ENCODE measurements at regions of chr9 and their contacts with region 1.

Region 1: DNA sequence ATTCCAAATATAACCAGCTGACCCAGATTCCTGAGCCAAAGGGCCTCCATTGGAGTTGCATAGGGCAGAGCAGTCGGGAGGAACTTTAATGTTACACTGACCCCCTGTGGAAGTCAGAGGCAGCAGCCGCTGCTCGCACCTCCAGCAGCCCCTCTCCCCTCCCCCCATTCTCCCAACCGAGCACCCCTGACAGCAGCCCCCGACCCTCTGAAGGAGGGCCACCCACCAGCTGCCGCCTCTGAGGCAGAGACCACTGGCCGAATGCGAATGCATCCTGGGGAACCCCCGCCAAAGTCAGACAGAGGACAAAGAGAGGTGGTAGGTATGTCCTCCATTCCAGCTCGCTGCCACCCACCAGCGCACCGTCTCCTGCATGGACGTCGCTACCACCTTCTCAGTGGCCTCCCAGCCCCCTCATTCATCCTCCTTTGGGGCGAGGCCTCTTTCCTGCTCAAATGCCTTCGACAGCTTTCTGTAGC is 231.0 kb downstream of the CDK5RAP2 start:
- DNase-seq: no peak
- ATAC-seq: peak; percentile 83
- H3K4me3 ChIP-seq: no peak overlapping the region
- H3K27ac ChIP-seq: no peak overlapping the region
- H3K4me1 ChIP-seq: no peaks in the 10 kb centered on the region
- H3K27me3 ChIP-seq: no peaks in the 10 kb centered on the region
- CTCF ChIP-seq: peak; percentile 76

Region 2: DNA sequence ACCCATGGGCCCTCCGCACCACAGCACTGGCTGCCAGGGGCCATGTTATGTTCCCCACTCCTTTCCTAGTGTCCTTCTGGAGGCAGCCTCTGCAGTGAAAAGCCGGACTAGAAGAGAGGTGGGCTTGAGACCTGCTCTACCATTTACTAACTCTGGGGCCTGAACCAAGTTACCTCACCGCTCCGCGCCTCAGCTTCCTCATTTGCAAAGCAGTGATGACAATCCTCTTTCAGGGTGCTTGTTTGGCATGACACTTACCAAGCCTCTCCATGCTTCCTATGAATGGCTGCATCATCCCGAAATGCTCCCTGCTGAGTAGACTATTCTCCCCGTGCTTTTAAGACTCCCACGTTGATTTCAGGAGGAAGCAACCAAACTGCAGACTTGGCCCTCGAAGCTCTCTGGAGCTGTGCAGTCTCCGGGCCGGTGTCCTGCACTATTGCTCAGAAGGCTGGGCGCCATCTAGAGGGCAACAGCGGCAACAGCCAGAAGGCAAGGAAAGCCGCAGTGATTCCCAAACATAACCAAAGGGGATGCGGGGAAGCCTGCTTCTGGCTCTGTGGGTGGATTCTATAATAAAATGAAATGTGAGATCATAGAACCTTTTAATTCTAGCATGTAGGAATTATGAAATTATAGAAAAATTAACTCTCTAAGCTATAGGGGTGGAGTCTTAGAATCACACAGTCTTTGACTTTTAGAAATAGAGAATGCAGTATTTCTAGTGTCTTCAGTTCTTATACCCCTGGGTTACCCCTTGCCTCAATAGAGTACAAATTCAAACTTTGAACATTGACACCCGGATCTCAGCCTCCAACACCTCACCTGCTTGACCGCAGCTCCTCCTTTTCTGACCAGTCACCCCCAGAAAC is 379.9 kb before region 1 on chr9:
- CTCF ChIA-PET with region 1: no interaction called
- POLR2A ChIA-PET with region 1: no interaction called
- in situ Hi-C with region 1: no loop called
- intact Hi-C with region 1: loop called (anchors 10 kb)
- DNase-seq: no peak
- ATAC-seq: peak; percentile 94
- H3K4me3 ChIP-seq: no peak overlapping the region
- H3K27ac ChIP-seq: no peak overlapping the region
- H3K4me1 ChIP-seq: peaks cover 3% of the 10 kb centered on the region
- H3K27me3 ChIP-seq: no peaks in the 10 kb centered on the region
- CTCF ChIP-seq: peak; percentile 92

Region 3: DNA sequence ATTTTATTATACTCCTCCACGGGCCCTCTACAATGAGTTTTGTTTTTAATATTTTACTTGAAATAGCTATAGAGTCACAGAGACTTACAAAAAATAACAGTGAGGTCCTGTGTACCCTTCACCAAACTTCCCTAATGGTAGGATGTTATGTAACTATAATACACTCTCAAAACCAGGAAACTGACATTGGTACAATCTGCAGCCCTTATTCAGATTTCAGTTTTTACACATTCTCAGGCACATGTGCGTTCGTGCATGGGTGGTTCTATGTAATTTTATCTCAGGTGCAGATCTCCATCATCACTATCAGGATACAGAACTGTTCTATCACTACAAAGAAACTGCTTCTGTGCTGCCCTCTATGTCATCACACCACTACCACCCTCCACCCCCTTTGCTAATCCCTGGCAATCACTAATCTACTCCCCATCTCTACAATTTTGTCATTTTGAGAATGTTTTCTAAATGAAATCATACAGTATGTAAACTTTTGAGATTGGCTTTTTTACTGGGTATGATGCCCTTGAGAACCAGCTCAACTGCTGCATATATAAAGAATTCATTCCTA is 836.3 kb after region 1 on chr9:
- CTCF ChIA-PET with region 1: no interaction called
- POLR2A ChIA-PET with region 1: no interaction called
- in situ Hi-C with region 1: no loop called
- intact Hi-C with region 1: no loop called
- DNase-seq: no peak
- ATAC-seq: no peak
- H3K4me3 ChIP-seq: no peak overlapping the region
- H3K27ac ChIP-seq: no peak overlapping the region
- H3K4me1 ChIP-seq: peaks cover 14% of the 10 kb centered on the region
- H3K27me3 ChIP-seq: no peaks in the 10 kb centered on the region
- CTCF ChIP-seq: no peak

Measured in Panc1 (cell line).